H1 (cell line): ENCODE measurements at regions of chr17 and their contacts with region 1.

Region 1: GRCh38 chr17:19447085-19447583 is 36.1 kb downstream of the RNF112 start:
- DNase-seq: peak in 1 of 2 experiments; percentile 93
- H3K4me3 ChIP-seq: no peak overlapping the region
- H3K27ac ChIP-seq: no peak overlapping the region
- H3K4me1 ChIP-seq: peaks cover 2 to 9% (median 4%) of the 10 kb centered on the region in 4 experiments; a peak in 4 of 7 replicates
- H3K27me3 ChIP-seq: no peaks in the 10 kb centered on the region
- CTCF ChIP-seq: peak; percentile 59 to 84 (median 83)
- EP300 ChIP-seq: no peak
- POLR2A ChIP-seq: no peak
- RAD21 ChIP-seq: peak; percentile 90 to 92

Region 2: DNA sequence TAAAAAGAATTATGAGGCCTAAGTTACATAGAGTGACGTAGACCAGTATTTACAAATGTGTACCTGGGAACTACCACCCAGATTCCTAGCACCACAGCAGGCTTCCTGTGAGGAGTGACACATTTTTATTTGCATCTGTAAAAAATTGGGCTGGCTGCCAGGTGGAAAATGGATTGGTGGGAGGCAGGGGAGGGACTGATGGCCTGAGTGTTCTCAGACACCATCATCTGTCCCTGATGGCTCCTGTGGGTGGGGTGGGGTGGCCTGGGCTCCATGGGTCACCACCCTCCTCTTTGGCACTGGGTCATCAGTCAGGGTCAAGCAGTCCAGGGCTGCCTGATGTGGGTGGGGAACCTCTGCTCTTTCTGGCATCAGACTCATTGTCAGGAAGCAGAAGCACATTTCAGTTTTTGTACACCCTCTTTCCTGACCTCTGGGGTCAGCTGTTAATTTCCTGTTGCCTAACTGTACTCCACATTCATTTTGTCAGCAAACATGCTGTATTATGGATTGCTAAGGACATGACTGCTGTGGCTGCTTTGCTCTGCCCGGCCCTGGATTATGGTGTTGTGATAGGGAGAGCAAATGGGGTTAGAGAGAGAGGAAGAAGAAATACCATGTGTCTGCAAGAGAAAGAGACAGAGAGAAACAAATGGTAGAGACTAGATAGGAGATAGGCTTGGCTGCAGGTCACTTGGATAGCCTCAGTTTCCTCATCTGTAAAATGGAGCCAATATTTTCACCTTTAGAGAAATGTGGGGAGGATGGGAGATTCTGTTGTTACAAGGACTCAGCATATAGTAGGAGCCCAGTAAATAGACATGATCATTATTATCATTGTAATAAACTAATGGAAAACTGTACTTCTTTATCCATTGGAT is 48.6 kb before region 1 on chr17:
- CTCF ChIA-PET with region 1: interaction called, 19 read pairs
- POLR2A ChIA-PET with region 1: no interaction called
- DNase-seq: no peak
- H3K4me3 ChIP-seq: no peak overlapping the region
- H3K27ac ChIP-seq: no peak overlapping the region
- H3K4me1 ChIP-seq: peaks cover 2 to 9% (median 5%) of the 10 kb centered on the region in 4 experiments; a peak in 6 of 7 replicates
- H3K27me3 ChIP-seq: no peaks in the 10 kb centered on the region
- CTCF ChIP-seq: no peak
- EP300 ChIP-seq: no peak
- POLR2A ChIP-seq: no peak
- RAD21 ChIP-seq: no peak

Region 3: DNA sequence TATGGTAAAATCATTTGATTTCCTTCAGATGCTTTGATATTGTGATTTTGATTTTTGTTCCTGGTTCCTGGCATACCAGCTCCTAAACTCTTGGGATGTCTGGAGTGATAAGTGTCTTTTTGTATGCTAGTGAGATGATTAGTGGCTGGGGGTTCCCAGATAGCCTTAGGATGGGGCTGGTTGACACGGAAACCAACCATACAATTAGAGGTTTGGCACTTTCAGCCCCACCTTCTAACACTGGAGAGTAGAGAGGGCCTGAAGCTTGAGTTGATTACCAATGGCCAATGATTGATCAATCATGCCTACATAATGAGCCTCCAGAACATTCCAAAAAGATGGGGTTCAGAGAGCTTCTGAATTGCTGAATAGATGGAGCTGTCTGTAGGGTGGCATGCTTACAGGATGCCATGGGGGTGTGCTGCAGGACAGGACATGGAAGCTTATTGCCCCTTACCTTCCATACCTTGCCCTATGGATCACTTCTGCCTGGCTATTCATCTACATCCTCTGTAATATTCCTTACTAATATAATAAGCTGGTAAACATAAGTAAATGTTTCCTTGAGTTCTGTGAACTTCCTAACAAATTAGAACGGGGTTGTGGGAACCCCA is 13.3 kb before region 1 on chr17:
- CTCF ChIA-PET with region 1: interaction called, 31 read pairs
- POLR2A ChIA-PET with region 1: interaction called, 3 read pairs
- DNase-seq: no peak
- H3K4me3 ChIP-seq: peak overlapping the region in 1 of 4 experiments; percentile 31; a peak in 2 of 8 replicates
- H3K27ac ChIP-seq: no peak overlapping the region
- H3K4me1 ChIP-seq: peaks cover 5 to 16% (median 11%) of the 10 kb centered on the region in 4 experiments
- H3K27me3 ChIP-seq: no peaks in the 10 kb centered on the region
- CTCF ChIP-seq: peak; percentile 56 to 66 (median 58)
- EP300 ChIP-seq: no peak
- POLR2A ChIP-seq: no peak
- RAD21 ChIP-seq: peak; percentile 79 to 83

Region 4: GRCh38 chr17:19464031-19465026 is 17.2 kb after region 1 on chr17:
- CTCF ChIA-PET with region 1: interaction called, 35 read pairs
- POLR2A ChIA-PET with region 1: interaction called, 13 read pairs
- DNase-seq: no peak
- H3K4me3 ChIP-seq: no peak overlapping the region
- H3K27ac ChIP-seq: no peak overlapping the region
- H3K4me1 ChIP-seq: peaks cover 11 to 28% (median 23%) of the 10 kb centered on the region in 4 experiments
- H3K27me3 ChIP-seq: no peaks in the 10 kb centered on the region
- CTCF ChIP-seq: no peak
- EP300 ChIP-seq: no peak
- POLR2A ChIP-seq: no peak
- RAD21 ChIP-seq: no peak

Region 5: DNA sequence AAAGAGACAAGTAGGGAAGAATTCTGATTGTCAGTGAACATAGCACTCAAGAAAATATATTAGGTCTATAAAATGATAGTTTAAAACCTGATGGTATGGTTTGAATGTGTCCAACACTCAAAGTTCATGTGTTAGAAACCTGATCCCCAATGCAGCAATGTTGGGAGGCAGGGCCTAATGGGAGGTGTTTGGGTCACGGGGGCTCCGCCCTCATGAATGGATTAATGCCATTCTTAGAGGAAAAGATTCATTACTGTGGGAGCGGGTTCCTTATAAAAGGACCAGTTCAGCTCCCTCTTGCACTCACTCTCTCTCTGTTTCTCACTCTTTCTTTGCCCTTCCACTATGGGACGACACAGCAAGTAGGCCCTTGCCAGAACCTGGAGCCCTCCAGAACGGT is 45.0 kb after region 1 on chr17:
- CTCF ChIA-PET with region 1: no interaction called
- POLR2A ChIA-PET with region 1: no interaction called
- DNase-seq: no peak
- H3K4me3 ChIP-seq: no peak overlapping the region
- H3K27ac ChIP-seq: no peak overlapping the region
- H3K4me1 ChIP-seq: peaks cover 4 to 17% (median 7%) of the 10 kb centered on the region in 4 experiments
- H3K27me3 ChIP-seq: no peaks in the 10 kb centered on the region
- CTCF ChIP-seq: no peak
- EP300 ChIP-seq: no peak
- POLR2A ChIP-seq: no peak
- RAD21 ChIP-seq: no peak